ENCODE measurements at regions of chr10 and their contacts with region 1.

Region 1: DNA sequence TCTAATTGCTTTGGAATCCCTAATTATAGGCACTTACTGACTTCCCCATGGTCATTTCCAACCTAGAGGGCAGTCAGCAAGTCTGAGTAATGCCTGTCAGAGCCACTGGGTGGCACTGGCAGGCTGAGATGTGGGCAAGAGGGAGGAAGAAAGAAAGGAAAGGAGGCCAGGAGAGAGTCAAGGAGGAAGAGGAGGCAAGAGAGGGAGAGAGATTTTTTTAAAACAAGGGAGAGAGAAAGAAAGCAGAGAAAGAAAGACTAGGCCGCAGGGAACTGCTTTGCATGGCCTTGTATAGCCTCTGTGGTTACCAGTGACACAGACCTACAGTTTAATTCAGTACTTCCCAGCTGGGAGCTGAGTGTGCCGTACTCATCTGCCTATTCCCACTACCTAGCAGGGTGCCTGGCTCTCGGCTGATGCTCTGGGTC is 210.4 kb upstream of the ADO start:
- DNase-seq: peak; percentile 65
- ATAC-seq: peak; percentile 84
- H3K4me3 Mint-ChIP-seq: no peak overlapping the region
- H3K27ac Mint-ChIP-seq: peak overlapping the region; percentile 6
- H3K4me1 Mint-ChIP-seq: peaks cover 10% of the 10 kb centered on the region
- H3K27me3 Mint-ChIP-seq: peaks cover 5% of the 10 kb centered on the region
- CTCF ChIP-seq: peak; percentile 98

Region 2: DNA sequence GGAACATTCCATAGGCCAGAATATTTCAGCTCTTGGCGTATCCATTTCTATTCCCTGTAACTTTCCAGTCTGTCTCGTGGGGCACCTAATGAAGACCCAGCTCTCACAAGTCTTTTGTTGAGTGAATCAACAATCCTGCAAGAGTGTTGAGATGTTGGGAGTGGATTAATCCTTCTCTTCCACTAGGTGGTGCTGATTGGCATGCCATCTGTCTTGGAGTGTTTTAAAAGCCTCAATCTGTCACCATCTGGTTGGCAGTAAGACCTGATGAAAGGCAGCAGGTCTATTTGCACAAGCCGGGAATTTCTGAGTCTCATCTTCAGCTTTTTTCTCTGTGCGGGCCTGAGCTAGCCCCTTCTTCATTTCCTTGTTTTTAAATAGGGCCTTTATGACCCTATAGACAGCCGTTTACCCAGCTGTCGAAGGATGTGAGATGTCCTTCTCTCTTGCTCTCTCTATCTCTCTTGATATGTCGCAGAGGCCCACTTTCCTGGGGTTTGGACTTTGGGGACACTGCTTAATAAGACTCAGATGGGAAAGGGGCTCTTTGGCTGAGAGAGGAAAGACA is 39.4 kb before region 1 on chr10:
- CTCF ChIA-PET with region 1: interaction called, 13 read pairs
- POLR2A ChIA-PET with region 1: no interaction called
- intact Hi-C with region 1: no loop called
- DNase-seq: peak; percentile 13
- ATAC-seq: peak; percentile 53
- H3K4me3 Mint-ChIP-seq: no peak overlapping the region
- H3K27ac Mint-ChIP-seq: no peak overlapping the region
- H3K4me1 Mint-ChIP-seq: no peaks in the 10 kb centered on the region
- H3K27me3 Mint-ChIP-seq: peaks cover 12% of the 10 kb centered on the region
- CTCF ChIP-seq: peak; percentile 25

Region 3: DNA sequence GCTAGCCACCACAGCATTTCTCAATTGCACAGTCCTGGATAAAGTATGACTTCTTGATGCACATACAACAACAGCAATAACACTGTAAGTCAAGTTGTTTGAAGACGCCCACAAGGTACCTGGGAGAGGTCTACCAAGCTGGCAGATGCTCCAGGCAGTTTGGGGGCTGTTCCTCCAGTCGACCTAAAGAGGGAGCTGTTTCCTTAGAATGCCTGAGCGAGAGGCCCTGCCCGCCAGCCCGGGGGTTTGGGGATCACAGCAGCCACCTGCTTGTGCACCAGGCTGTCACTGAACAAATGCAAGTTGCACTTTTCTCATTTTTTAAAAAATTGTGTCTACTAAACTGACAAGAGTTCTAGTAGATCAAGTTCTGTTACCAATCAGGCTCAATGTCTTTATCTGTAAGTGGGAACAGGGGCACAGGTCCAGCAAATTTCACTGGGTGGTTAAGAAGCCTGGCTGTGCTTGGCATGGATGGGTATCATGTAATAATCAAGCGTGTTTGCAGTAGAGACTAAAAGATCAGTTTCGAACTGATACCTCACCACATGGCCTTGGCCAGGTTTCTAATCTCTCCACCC is 16.6 kb after region 1 on chr10:
- CTCF ChIA-PET with region 1: interaction called, 42 read pairs
- POLR2A ChIA-PET with region 1: no interaction called
- intact Hi-C with region 1: no loop called
- DNase-seq: peak; percentile 86
- ATAC-seq: peak; percentile 81
- H3K4me3 Mint-ChIP-seq: no peak overlapping the region
- H3K27ac Mint-ChIP-seq: no peak overlapping the region
- H3K4me1 Mint-ChIP-seq: peaks cover 40% of the 10 kb centered on the region
- H3K27me3 Mint-ChIP-seq: peaks cover 4% of the 10 kb centered on the region
- CTCF ChIP-seq: peak; percentile 87

Region 4: GRCh38 chr10:63083904-63084689 is 490.0 kb after region 1 on chr10:
- CTCF ChIA-PET with region 1: interaction called, 9 read pairs
- POLR2A ChIA-PET with region 1: no interaction called
- intact Hi-C with region 1: loop called (anchors 5 kb)
- DNase-seq: peak; percentile 61
- ATAC-seq: peak; percentile 75
- H3K4me3 Mint-ChIP-seq: no peak overlapping the region
- H3K27ac Mint-ChIP-seq: no peak overlapping the region
- H3K4me1 Mint-ChIP-seq: no peaks in the 10 kb centered on the region
- H3K27me3 Mint-ChIP-seq: peaks cover 16% of the 10 kb centered on the region
- CTCF ChIP-seq: peak; percentile 75